Calu3 (cell line): ENCODE measurements at regions of chr14 and their contacts with region 1.

Region 1: GRCh38 chr14:100979780-100980179 is 76.3 kb upstream of the RTL1 start:
- DNase-seq: no peak
- H3K4me3 Mint-ChIP-seq: no peak overlapping the region
- H3K27ac Mint-ChIP-seq: peak overlapping the region; percentile 84
- H3K4me1 Mint-ChIP-seq: peaks cover 46% of the 10 kb centered on the region
- H3K27me3 Mint-ChIP-seq: no peaks in the 10 kb centered on the region
- CTCF ChIP-seq: no peak

Region 2: DNA sequence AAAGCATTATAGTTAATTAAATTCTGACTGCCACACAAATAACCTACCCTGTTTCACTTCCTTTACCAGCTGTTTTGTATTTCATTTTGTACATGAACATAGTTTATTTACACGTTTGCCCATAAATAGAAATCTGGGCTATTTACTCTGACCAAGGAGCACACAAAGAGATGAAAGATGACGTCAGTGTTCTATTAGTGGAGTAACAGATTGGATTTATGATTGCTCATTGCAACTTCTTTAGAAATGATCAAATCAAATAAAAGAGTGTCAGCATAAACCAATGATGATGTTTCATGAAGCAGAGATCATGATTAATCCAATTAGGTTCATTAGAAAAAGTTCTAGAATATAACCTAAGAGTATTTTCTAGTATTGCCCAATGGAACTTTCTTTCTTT is 64.2 kb before region 1 on chr14:
- CTCF ChIA-PET with region 1: no interaction called
- intact Hi-C with region 1: loop called (anchors 5 kb)
- DNase-seq: no peak
- H3K4me3 Mint-ChIP-seq: no peak overlapping the region
- H3K27ac Mint-ChIP-seq: no peak overlapping the region
- H3K4me1 Mint-ChIP-seq: peaks cover 27% of the 10 kb centered on the region
- H3K27me3 Mint-ChIP-seq: no peaks in the 10 kb centered on the region
- CTCF ChIP-seq: no peak

Region 3: DNA sequence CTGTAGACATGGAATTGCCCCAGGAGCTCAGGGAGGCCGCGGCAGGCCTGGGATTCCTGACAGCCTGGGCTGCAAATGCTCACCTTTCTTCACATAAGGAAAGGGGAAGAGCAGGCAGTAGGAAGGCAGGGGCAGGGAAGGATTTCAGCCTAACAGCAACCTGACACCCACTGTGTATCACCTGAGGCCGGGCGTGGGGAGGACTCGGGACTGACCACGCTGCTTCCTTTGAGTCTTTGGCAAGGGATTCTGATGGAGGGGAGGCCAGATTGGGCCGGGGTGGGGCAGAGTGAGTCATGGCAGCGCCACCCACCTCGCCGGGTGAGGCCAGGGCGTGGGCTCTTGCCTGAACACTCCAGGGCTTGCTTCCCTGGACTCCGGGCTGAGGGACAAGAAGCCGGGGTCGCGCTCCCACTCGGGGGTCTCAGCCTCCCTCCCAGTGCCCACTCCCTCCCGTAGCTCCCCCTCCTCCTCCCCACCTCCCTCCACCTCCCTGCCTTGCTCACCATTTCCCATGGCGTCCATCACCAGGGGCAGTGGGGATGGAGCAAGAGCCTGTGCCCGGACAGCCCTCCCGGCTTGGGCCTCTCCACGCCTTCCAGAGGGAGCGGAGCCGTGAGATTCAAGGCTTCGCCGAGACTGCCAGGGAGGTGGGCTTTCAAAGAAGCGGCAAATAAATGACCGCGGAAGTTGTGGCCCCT is 171.6 kb after region 1 on chr14:
- CTCF ChIA-PET with region 1: no interaction called
- intact Hi-C with region 1: loop called (anchors 10 kb)
- DNase-seq: peak; percentile 63
- H3K4me3 Mint-ChIP-seq: peak overlapping the region; percentile 34
- H3K27ac Mint-ChIP-seq: peak overlapping the region; percentile 43
- H3K4me1 Mint-ChIP-seq: peaks cover 23% of the 10 kb centered on the region
- H3K27me3 Mint-ChIP-seq: no peaks in the 10 kb centered on the region
- CTCF ChIP-seq: no peak

Region 4: GRCh38 chr14:101301011-101301410 is 321.2 kb after region 1 on chr14:
- CTCF ChIA-PET with region 1: no interaction called
- intact Hi-C with region 1: no loop called
- DNase-seq: no peak
- H3K4me3 Mint-ChIP-seq: no peak overlapping the region
- H3K27ac Mint-ChIP-seq: no peak overlapping the region
- H3K4me1 Mint-ChIP-seq: no peaks in the 10 kb centered on the region
- H3K27me3 Mint-ChIP-seq: no peaks in the 10 kb centered on the region
- CTCF ChIP-seq: no peak